ENCODE measurements at regions of chr2 and their contacts with region 1.

Region 1: GRCh38 chr2:232339121-232340081 is 39.1 kb upstream of the ALPP start:
- DNase-seq: peak in 1 of 2 experiments; percentile 29
- H3K4me3 ChIP-seq: no peak overlapping the region
- H3K4me1 ChIP-seq: no peaks in the 10 kb centered on the region
- H3K27me3 ChIP-seq: no peaks in the 10 kb centered on the region

Region 2: DNA sequence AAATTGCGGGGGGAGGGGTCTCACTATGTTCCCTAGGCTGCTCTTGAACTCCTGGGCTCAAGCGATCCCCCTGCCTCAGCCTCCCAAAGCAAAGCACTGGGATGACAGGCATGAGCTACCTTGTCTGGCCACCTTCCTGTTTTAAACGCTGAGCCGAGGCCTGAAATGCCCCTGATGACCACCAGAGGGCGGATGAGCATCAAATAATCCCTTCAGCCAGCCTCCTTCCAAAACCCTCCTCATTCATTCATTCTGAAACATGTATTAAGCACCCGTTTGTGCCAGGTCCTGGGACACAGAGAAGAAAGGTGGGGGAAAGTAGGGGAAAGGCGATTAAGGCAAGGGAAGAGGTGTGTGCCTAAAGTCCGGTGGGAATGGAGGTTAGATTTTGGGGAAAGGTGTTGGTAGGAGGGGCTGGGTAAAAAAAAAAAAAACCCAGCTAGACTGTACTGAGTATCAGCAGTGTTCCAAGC is 661.7 kb before region 1 on chr2:
- in situ Hi-C with region 1: no loop called
- DNase-seq: peak; percentile 83 to 87
- H3K4me3 ChIP-seq: no peak overlapping the region
- H3K4me1 ChIP-seq: peaks cover 19% of the 10 kb centered on the region
- H3K27me3 ChIP-seq: no peaks in the 10 kb centered on the region

Region 3: DNA sequence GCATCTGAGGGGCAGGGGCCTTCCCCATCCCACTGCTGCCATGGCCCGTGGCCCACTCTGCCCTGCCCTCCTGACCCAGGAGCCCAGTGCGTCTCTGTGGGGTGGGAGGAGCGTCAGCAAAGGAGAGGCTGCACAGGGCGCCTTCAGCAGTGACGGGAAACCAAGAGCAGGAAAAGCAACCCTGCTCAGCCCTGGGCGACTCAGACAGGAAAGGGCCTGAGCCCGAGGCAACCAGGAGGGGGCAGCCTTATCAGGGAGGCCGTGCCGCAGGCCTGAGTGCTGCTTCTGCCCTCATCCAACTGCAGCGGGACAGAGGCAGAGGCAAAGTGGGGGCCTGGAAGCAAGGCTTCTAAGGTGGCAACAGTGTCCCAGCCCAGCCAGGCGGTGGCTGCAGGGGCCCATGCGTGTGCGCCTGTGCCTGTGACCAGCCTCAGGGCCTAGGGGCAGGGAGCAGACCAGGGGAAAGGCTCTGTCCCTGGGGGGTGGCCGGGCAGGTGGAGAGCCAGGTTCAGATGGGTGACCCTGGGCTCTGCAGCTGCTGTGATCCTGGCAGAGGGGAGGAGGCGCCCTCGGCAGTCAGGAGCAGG is 93.3 kb after region 1 on chr2:
- in situ Hi-C with region 1: loop called (anchors 5 kb)
- DNase-seq: peak in 1 of 2 experiments; percentile 41
- H3K4me3 ChIP-seq: no peak overlapping the region
- H3K4me1 ChIP-seq: no peaks in the 10 kb centered on the region
- H3K27me3 ChIP-seq: no peaks in the 10 kb centered on the region

Region 4: GRCh38 chr2:232487385-232488096 is 148.1 kb after region 1 on chr2 and contains the start of gene ECEL1:
- in situ Hi-C with region 1: no loop called
- DNase-seq: no peak
- H3K4me3 ChIP-seq: no peak within 1 kb of the TSS
- H3K4me1 ChIP-seq: no peaks in the 10 kb centered on the region
- H3K27me3 ChIP-seq: peaks cover 44% of the 10 kb centered on the region

Measured in HAP-1 (cell line).